ENCODE measurements at regions of chrX and their contacts with region 1.

Region 1: DNA sequence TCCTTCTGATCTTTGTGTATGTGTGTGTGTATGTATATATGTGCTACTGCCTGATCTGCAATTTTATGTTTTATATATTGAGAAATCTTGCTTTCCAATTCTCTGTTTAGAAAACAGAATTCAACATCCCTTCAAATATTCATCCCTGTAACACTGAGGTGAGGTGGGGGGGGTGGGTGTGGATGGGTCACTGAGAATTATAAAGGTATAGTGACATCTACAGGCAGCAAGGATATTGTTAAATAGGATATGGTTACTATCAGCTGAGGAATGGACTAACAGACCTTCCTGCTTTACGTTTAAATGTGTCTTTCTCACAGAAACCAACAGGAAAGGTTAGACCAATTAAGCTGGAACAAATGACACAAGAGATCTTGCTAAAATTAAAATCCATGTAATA is 19.0 kb upstream of the MAGEB2 start:
- DNase-seq: no peak
- H3K4me3 Mint-ChIP-seq: no peak overlapping the region
- H3K27ac Mint-ChIP-seq: no peak overlapping the region
- H3K4me1 Mint-ChIP-seq: no peaks in the 10 kb centered on the region
- H3K27me3 Mint-ChIP-seq: no peaks in the 10 kb centered on the region
- CTCF ChIP-seq: no peak

Region 2: DNA sequence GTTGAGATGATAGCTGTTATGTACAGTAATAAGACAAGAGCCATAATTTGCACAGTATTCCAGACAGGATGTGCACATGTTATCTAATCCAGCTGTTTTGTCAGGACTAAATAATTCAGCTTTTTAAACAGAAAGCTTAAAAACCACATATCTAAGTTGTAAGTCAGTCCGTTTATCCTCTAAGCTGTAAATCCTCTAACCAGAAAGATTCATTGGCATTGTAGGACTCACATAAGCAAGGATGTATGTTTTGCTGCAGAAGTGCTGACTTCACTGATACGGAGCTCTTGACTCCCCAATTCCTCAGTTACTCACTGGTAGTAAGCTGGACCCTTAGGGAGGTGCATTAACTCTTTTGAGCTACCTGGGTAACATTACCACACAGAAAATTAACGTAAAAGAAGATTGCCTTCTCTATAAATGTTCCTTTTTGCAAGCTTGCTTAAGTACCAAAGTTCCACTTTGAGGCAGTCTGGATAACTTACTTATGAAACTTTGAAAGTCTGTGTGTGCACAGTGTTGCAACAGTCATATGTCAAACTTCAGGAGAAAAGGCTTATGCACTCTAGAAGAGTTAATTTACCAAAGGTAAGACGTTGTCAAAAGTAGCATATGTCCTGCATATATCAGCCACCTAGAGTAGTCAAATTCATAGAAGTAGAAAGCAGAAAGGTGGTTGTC is 39.3 kb before region 1 on chrX:
- CTCF ChIA-PET with region 1: no interaction called
- intact Hi-C with region 1: loop called (anchors 1 kb)
- DNase-seq: no peak
- H3K4me3 Mint-ChIP-seq: no peak overlapping the region
- H3K27ac Mint-ChIP-seq: no peak overlapping the region
- H3K4me1 Mint-ChIP-seq: no peaks in the 10 kb centered on the region
- H3K27me3 Mint-ChIP-seq: no peaks in the 10 kb centered on the region
- CTCF ChIP-seq: no peak

Region 3: GRCh38 chrX:30230395-30230794 is 34.1 kb after region 1 on chrX and contains the start of gene MAGEB3:
- CTCF ChIA-PET with region 1: no interaction called
- intact Hi-C with region 1: no loop called
- DNase-seq: no peak
- H3K4me3 Mint-ChIP-seq: no peak within 1 kb of the TSS
- H3K27ac Mint-ChIP-seq: no peak within 1 kb of the TSS
- H3K4me1 Mint-ChIP-seq: no peaks in the 10 kb centered on the region
- H3K27me3 Mint-ChIP-seq: no peaks in the 10 kb centered on the region
- CTCF ChIP-seq: no peak
- total RNA-seq, gene MAGEB3: not detected in 2 replicates

Region 4: DNA sequence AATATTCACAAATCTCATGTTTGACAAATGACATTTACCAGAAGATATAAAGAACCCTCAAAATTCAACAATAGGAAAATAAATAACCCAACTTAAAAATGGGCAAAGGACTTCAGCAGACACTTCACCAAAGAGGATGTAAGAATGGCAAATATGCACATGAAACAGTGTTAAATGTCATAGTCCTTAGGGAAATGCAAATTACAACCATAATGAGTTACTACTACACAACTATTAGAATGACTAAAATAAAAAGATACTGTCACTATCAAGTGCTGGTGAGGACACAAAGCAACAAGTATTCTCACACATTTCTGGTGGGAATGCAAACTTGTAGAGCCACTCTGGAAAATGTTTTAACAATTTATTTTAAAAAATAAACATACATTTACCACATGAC is 153.6 kb after region 1 on chrX:
- CTCF ChIA-PET with region 1: no interaction called
- intact Hi-C with region 1: no loop called
- DNase-seq: no peak
- H3K4me3 Mint-ChIP-seq: no peak overlapping the region
- H3K27ac Mint-ChIP-seq: no peak overlapping the region
- H3K4me1 Mint-ChIP-seq: no peaks in the 10 kb centered on the region
- H3K27me3 Mint-ChIP-seq: no peaks in the 10 kb centered on the region
- CTCF ChIP-seq: no peak

Measured in Calu3 (cell line).